Activated T-helper 2 cell treated with anti-CD3 and anti-CD28 coated beads, Interferon-gamma antibody, Interleukin-2, Interleukin-4, amounts not matched to agents 10 μg/mL and 5 μg/mL and 100 μg/mL, durations not matched to agents 14 hours and 24 hours and 36 hours (primary cell): ENCODE measurements at regions of chr19 and their contacts with region 1.

Region 1: GRCh38 chr19:35545001-35545911 is at the start of gene TMEM147:
- DNase-seq: peak; percentile 78
- H3K4me3 Mint-ChIP-seq: peak within 1 kb of the TSS; percentile 94
- H3K27ac Mint-ChIP-seq: peak within 1 kb of the TSS; percentile 95
- H3K4me1 Mint-ChIP-seq: peaks cover 18% of the 10 kb centered on the region
- H3K27me3 Mint-ChIP-seq: no peaks in the 10 kb centered on the region
- total RNA-seq, gene TMEM147: 121 and 122 TPM in 2 replicates

Region 2: GRCh38 chr19:35509861-35510625 is 35.2 kb before region 1 on chr19:
- intact Hi-C with region 1: loop called (anchors 5 kb)
- DNase-seq: peak; percentile 56
- H3K4me3 Mint-ChIP-seq: peak overlapping the region; percentile 30
- H3K27ac Mint-ChIP-seq: no peak overlapping the region
- H3K4me1 Mint-ChIP-seq: peaks cover 11% of the 10 kb centered on the region
- H3K27me3 Mint-ChIP-seq: peaks cover 49% of the 10 kb centered on the region

Region 3: DNA sequence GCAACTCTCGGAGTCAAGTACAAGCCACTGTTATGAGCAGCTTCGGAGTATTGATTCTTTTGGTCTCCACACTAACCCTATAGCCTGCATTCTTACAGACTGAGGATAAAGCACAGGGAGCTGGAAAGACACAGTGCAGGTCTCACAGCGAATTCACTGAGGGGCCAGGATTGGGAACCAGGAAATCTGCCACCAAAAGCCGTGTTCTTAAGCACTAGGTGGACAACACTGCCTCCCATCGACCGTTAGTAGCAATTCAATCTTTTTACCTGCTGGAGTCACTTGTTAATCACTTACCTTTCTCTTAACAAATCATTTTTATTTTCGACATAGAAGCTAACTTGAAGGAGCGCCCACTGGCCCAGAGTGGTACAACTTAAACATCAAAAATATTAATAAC is 47.0 kb after region 1 on chr19:
- intact Hi-C with region 1: loop called (anchors 1 kb)
- DNase-seq: no peak
- H3K4me3 Mint-ChIP-seq: no peak overlapping the region
- H3K27ac Mint-ChIP-seq: no peak overlapping the region
- H3K4me1 Mint-ChIP-seq: peaks cover 6% of the 10 kb centered on the region
- H3K27me3 Mint-ChIP-seq: no peaks in the 10 kb centered on the region

Region 4: GRCh38 chr19:35612559-35613321 is 67.5 kb after region 1 on chr19 and contains the start of gene HAUS5:
- intact Hi-C with region 1: loop called (anchors 1 kb)
- DNase-seq: peak; percentile 94
- H3K4me3 Mint-ChIP-seq: peak within 1 kb of the TSS; percentile 81
- H3K27ac Mint-ChIP-seq: peak within 1 kb of the TSS; percentile 83
- H3K4me1 Mint-ChIP-seq: peaks cover 20% of the 10 kb centered on the region
- H3K27me3 Mint-ChIP-seq: no peaks in the 10 kb centered on the region
- total RNA-seq, gene HAUS5: 42.5 and 43.1 TPM in 2 replicates

Region 5: DNA sequence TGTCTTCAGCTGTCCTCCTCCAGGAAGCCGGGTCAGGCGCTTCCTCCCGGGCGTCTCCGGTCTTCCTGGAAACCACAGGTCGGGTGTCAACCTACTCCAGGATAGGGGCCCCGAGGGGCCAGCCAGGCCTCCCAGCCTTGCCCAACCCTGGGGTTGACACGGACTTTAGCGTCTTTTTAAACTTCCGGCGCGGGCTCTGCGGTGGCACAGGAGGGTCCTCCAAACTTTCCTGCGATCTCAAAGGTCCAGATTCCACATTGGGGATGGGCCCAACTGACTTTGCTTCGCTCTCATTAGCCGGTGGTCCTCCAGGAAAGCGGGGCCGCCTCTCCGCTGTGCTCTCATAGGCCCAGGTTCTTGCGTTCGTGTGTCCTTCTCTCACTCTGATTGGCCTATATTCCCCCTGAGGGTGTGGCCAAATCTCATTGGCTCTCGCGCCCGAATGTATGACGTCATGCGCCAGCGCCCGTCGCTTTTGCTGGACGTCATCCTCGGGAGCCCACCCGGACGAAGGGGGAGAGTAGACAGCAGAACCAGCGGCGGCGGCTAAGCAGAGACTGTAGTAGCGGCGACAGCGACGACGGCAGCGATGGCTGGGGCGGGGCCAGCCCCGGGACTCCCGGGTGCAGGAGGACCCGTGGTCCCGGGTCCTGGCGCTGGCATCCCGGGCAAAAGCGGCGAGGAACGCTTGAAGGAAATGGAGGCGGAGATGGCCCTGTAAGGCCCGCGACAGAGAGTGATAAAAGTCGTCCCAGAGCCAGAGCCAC is 83.5 kb after region 1 on chr19 and contains the start of gene RBM42:
- intact Hi-C with region 1: loop called (anchors 1 kb)
- DNase-seq: peak; percentile 97
- H3K4me3 Mint-ChIP-seq: peak within 1 kb of the TSS; percentile 100
- H3K27ac Mint-ChIP-seq: peak within 1 kb of the TSS; percentile 99
- H3K4me1 Mint-ChIP-seq: peaks cover 14% of the 10 kb centered on the region
- H3K27me3 Mint-ChIP-seq: no peaks in the 10 kb centered on the region
- total RNA-seq, gene RBM42: 101 and 102 TPM in 2 replicates

Region 6: GRCh38 chr19:35710784-35711723 is 165.8 kb after region 1 on chr19:
- intact Hi-C with region 1: loop called (anchors 5 kb)
- DNase-seq: peak; percentile 71
- H3K4me3 Mint-ChIP-seq: peak overlapping the region; percentile 66
- H3K27ac Mint-ChIP-seq: peak overlapping the region; percentile 100
- H3K4me1 Mint-ChIP-seq: peaks cover 40% of the 10 kb centered on the region
- H3K27me3 Mint-ChIP-seq: no peaks in the 10 kb centered on the region